ENCODE measurements at regions of chr17 and their contacts with region 1.

Region 1: DNA sequence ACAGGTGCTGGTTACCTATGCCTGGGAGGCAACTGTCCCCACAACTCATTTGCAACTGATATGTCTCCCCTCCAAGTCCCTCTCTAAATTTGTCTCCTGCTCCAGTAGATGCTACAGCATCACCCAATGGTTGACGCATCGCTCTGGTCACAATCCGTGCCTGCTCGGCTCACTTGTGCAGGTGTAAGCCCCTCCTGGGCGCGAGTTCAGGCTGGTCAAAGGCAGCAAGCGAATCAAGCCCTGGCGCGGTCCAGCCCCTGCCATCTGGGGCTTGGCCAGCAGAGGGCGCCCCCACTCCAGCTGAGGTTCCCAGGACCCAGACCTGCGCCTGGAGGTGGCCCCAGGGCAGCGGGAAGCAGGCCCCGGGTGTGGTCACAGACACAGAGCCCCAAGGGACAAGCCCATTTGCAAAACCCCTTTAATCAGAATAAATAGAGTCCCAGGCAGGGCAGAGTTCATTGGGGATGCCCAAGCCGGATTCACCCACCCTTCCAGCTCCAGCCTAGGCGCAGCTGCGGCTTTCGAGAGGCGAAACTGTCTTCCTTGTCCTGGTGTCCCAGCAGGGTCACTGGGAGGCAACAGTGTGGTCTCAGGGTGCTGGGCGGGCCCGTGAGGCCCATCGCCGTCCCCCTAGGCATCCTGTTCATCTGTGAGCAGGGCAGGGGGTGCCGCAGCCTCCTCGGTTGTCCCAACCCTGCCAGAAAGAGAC is 15.9 kb downstream of the TMC6 start:
- DNase-seq: peak; percentile 89
- ATAC-seq: peak; percentile 60
- H3K4me3 Mint-ChIP-seq: no peak overlapping the region
- H3K27ac Mint-ChIP-seq: peak overlapping the region; percentile 83
- H3K4me1 Mint-ChIP-seq: peaks cover 35% of the 10 kb centered on the region
- H3K27me3 Mint-ChIP-seq: no peaks in the 10 kb centered on the region

Region 2: GRCh38 chr17:77796176-77796860 is 316.4 kb before region 1 on chr17:
- CTCF ChIA-PET with region 1: no interaction called
- POLR2A ChIA-PET with region 1: no interaction called
- intact Hi-C with region 1: no loop called
- DNase-seq: no peak
- ATAC-seq: no peak
- H3K4me3 Mint-ChIP-seq: no peak overlapping the region
- H3K27ac Mint-ChIP-seq: no peak overlapping the region
- H3K4me1 Mint-ChIP-seq: no peaks in the 10 kb centered on the region
- H3K27me3 Mint-ChIP-seq: peaks cover 4% of the 10 kb centered on the region

Region 3: GRCh38 chr17:78082988-78083387 is 29.7 kb before region 1 on chr17:
- CTCF ChIA-PET with region 1: interaction called, 14 read pairs
- POLR2A ChIA-PET with region 1: no interaction called
- intact Hi-C with region 1: no loop called
- DNase-seq: no peak
- ATAC-seq: no peak
- H3K4me3 Mint-ChIP-seq: no peak overlapping the region
- H3K27ac Mint-ChIP-seq: no peak overlapping the region
- H3K4me1 Mint-ChIP-seq: no peaks in the 10 kb centered on the region
- H3K27me3 Mint-ChIP-seq: no peaks in the 10 kb centered on the region

Region 4: GRCh38 chr17:78133971-78134898 is 21.6 kb after region 1 on chr17:
- CTCF ChIA-PET with region 1: interaction called, 42 read pairs
- POLR2A ChIA-PET with region 1: interaction called, 3 read pairs
- intact Hi-C with region 1: loop called (anchors 1 kb)
- DNase-seq: peak; percentile 88
- ATAC-seq: peak; percentile 21
- H3K4me3 Mint-ChIP-seq: peak overlapping the region; percentile 94
- H3K27ac Mint-ChIP-seq: peak overlapping the region; percentile 73
- H3K4me1 Mint-ChIP-seq: peaks cover 72% of the 10 kb centered on the region
- H3K27me3 Mint-ChIP-seq: no peaks in the 10 kb centered on the region

Region 5: GRCh38 chr17:78176548-78177025 is 63.9 kb after region 1 on chr17:
- CTCF ChIA-PET with region 1: interaction called, 14 read pairs
- POLR2A ChIA-PET with region 1: no interaction called
- intact Hi-C with region 1: loop called (anchors 1 kb)
- DNase-seq: peak; percentile 86
- ATAC-seq: peak; percentile 77
- H3K4me3 Mint-ChIP-seq: no peak overlapping the region
- H3K27ac Mint-ChIP-seq: no peak overlapping the region
- H3K4me1 Mint-ChIP-seq: peaks cover 47% of the 10 kb centered on the region
- H3K27me3 Mint-ChIP-seq: no peaks in the 10 kb centered on the region

Region 6: GRCh38 chr17:78214706-78215061 is 102.0 kb after region 1 on chr17:
- CTCF ChIA-PET with region 1: interaction called, 5 read pairs
- POLR2A ChIA-PET with region 1: interaction called, 3 read pairs
- intact Hi-C with region 1: loop called in 1 of 2 experiments (anchors 1 kb)
- DNase-seq: no peak
- ATAC-seq: no peak
- H3K4me3 Mint-ChIP-seq: peak overlapping the region; percentile 89
- H3K27ac Mint-ChIP-seq: peak overlapping the region; percentile 78
- H3K4me1 Mint-ChIP-seq: peaks cover 5% of the 10 kb centered on the region
- H3K27me3 Mint-ChIP-seq: no peaks in the 10 kb centered on the region

Measured in activated CD4-positive, alpha-beta T cell treated with anti-CD3 and anti-CD28 coated beads for 36 hours (primary cell).